Activated CD8-positive, alpha-beta T cell treated with anti-CD3 and anti-CD28 coated beads for 36 hours (primary cell): ENCODE measurements at regions of chr1 and their contacts with region 1.

Region 1: DNA sequence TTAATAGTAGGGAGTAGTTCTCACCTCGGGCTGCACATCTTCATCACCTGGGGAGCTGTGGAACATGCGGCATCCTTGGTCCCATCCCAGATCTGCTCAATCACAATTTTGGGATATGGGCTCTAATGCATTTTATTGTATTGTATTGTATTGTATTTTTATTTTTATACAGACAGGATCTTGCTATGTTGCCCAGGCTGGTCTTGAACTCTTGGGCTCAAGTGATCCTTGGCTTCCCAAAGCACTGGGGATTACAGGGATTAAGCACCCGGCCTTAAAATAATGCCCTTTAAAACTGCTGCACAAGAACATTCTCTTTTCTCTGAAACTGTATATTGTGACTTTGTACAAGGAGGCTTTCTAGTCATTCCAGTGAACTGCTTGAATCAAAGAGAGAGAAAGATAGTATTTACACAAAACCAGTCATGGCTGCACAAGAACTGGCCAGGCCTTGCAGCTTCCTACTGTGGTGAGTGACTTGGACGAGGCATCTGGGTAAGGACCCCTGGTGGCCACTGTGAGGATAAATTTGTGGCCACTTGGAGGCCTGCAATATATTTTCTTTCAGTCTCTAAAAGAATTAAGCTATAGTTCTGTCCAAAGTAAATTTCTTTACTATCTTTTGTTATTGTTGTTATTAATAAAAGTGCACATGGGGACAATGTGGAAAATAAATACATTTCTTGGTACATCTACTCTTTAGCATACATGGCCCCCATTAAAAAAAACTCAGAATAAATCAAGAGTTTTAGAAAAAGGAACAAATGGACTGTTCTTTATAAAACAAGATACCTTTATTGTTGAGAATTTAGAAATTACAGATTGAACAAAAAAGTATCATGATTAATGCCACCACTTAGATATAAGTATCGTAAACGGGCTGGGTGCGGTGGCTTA is 48.0 kb downstream of the TBCE start:
- DNase-seq: peak; percentile 74
- ATAC-seq: peak; percentile 87
- H3K4me3 Mint-ChIP-seq: no peak overlapping the region
- H3K27ac Mint-ChIP-seq: no peak overlapping the region
- H3K4me1 Mint-ChIP-seq: peaks cover 3% of the 10 kb centered on the region
- H3K27me3 Mint-ChIP-seq: no peaks in the 10 kb centered on the region
- CTCF ChIP-seq: peak; percentile 88

Region 2: GRCh38 chr1:235093696-235094592 is 321.3 kb before region 1 on chr1:
- CTCF ChIA-PET with region 1: interaction called, 28 read pairs
- POLR2A ChIA-PET with region 1: no interaction called
- intact Hi-C with region 1: loop called (anchors 2 kb)
- DNase-seq: peak; percentile 93
- ATAC-seq: peak; percentile 99
- H3K4me3 Mint-ChIP-seq: no peak overlapping the region
- H3K27ac Mint-ChIP-seq: peak overlapping the region; percentile 46
- H3K4me1 Mint-ChIP-seq: peaks cover 8% of the 10 kb centered on the region
- H3K27me3 Mint-ChIP-seq: peaks cover 6% of the 10 kb centered on the region
- CTCF ChIP-seq: peak; percentile 90

Region 3: GRCh38 chr1:235160957-235161684 is 254.1 kb before region 1 on chr1 and contains the start of gene RBM34:
- CTCF ChIA-PET with region 1: interaction called, 14 read pairs
- POLR2A ChIA-PET with region 1: no interaction called
- intact Hi-C with region 1: no loop called
- DNase-seq: peak; percentile 94
- ATAC-seq: peak; percentile 95
- H3K4me3 Mint-ChIP-seq: peak within 1 kb of the TSS; percentile 99
- H3K27ac Mint-ChIP-seq: peak within 1 kb of the TSS; percentile 100
- H3K4me1 Mint-ChIP-seq: peaks cover 16% of the 10 kb centered on the region
- H3K27me3 Mint-ChIP-seq: no peaks in the 10 kb centered on the region
- CTCF ChIP-seq: peak; percentile 10
- total RNA-seq, gene RBM34: 136 TPM

Region 4: GRCh38 chr1:235239851-235240250 is 175.4 kb before region 1 on chr1:
- CTCF ChIA-PET with region 1: interaction called, 39 read pairs
- POLR2A ChIA-PET with region 1: no interaction called
- intact Hi-C with region 1: no loop called
- DNase-seq: no peak
- ATAC-seq: no peak
- H3K4me3 Mint-ChIP-seq: no peak overlapping the region
- H3K27ac Mint-ChIP-seq: no peak overlapping the region
- H3K4me1 Mint-ChIP-seq: peaks cover 24% of the 10 kb centered on the region
- H3K27me3 Mint-ChIP-seq: no peaks in the 10 kb centered on the region
- CTCF ChIP-seq: no peak

Region 5: DNA sequence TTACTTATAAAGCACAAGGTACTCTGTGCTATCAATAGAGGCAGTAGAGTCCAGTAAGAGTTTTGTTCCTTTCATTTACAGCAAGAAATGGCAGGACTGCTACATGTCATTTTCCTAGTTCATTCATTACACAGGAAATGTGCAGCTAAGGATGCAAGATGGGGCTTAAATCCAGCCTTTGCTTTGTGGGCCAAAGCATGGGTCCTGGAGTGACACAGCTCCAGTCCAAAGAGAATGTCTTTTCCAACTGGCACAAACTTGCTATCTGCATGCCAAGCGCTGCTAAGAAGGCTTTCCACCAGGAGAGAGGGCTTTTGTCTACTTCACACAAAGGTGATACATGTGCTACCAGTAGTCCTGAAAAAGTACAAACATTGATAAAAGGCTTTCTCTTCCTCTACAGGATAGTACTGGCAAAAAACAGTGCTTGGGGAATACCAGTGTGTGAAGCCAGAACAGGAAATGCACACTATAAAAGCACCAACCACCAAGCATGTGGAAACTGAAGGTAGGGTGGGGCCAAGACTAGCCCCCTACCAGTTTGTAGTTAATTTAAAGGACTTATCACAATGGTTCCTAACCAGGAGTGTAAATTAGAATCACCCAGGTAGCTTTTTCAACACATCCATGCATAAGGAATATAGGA is 156.0 kb before region 1 on chr1:
- CTCF ChIA-PET with region 1: interaction called, 45 read pairs
- POLR2A ChIA-PET with region 1: interaction called, 3 read pairs
- intact Hi-C with region 1: no loop called
- DNase-seq: no peak
- ATAC-seq: peak; percentile 37
- H3K4me3 Mint-ChIP-seq: no peak overlapping the region
- H3K27ac Mint-ChIP-seq: peak overlapping the region; percentile 78
- H3K4me1 Mint-ChIP-seq: peaks cover 59% of the 10 kb centered on the region
- H3K27me3 Mint-ChIP-seq: no peaks in the 10 kb centered on the region
- CTCF ChIP-seq: no peak

Region 6: GRCh38 chr1:235351898-235352297 is 63.4 kb before region 1 on chr1:
- CTCF ChIA-PET with region 1: interaction called, 10 read pairs
- POLR2A ChIA-PET with region 1: no interaction called
- intact Hi-C with region 1: no loop called
- DNase-seq: no peak
- ATAC-seq: no peak
- H3K4me3 Mint-ChIP-seq: no peak overlapping the region
- H3K27ac Mint-ChIP-seq: no peak overlapping the region
- H3K4me1 Mint-ChIP-seq: no peaks in the 10 kb centered on the region
- H3K27me3 Mint-ChIP-seq: peaks cover 2% of the 10 kb centered on the region
- CTCF ChIP-seq: no peak

Region 7: GRCh38 chr1:235425357-235426025 is 10.2 kb after region 1 on chr1:
- CTCF ChIA-PET with region 1: interaction called, 24 read pairs
- POLR2A ChIA-PET with region 1: no interaction called
- intact Hi-C with region 1: no loop called
- DNase-seq: no peak
- ATAC-seq: no peak
- H3K4me3 Mint-ChIP-seq: no peak overlapping the region
- H3K27ac Mint-ChIP-seq: no peak overlapping the region
- H3K4me1 Mint-ChIP-seq: peaks cover 27% of the 10 kb centered on the region
- H3K27me3 Mint-ChIP-seq: no peaks in the 10 kb centered on the region
- CTCF ChIP-seq: no peak

Region 8: GRCh38 chr1:235461954-235462353 is 46.7 kb after region 1 on chr1:
- CTCF ChIA-PET with region 1: no interaction called
- POLR2A ChIA-PET with region 1: no interaction called
- intact Hi-C with region 1: no loop called
- DNase-seq: no peak
- ATAC-seq: no peak
- H3K4me3 Mint-ChIP-seq: no peak overlapping the region
- H3K27ac Mint-ChIP-seq: no peak overlapping the region
- H3K4me1 Mint-ChIP-seq: peaks cover 14% of the 10 kb centered on the region
- H3K27me3 Mint-ChIP-seq: no peaks in the 10 kb centered on the region
- CTCF ChIP-seq: no peak

Region 9: DNA sequence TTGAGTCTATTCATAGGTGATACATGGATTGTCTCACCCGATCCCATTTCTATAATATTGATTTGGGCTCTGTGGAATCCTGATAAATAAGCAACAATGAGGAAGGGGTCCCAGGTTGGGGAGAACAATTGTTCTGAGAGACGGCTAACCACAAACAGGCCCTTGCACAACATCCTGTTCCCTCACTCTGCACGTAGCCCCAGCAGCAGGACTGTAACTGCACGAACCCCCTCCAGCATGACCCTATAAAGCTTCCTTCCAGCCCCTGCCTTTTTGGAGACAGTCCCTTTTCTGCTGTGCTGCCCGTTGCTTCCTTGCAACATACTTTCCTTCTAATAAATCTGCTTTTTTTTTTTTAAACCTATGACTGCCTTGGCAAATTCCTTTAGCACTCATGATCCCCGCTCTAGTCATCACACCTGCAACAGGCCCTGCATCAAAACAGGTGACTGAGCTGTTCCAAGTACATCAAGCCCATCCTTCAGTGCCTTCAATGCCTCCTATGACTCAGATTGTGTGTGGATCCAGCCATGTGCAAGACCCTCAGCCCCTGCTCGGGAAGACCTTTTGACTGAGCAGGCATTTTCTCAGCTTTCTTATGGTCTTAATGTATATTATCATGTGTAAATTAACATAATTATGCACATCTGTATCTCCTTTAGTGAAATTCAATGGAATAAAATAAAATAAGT is 152.7 kb after region 1 on chr1:
- CTCF ChIA-PET with region 1: no interaction called
- POLR2A ChIA-PET with region 1: no interaction called
- intact Hi-C with region 1: no loop called
- DNase-seq: peak; percentile 57
- ATAC-seq: peak; percentile 82
- H3K4me3 Mint-ChIP-seq: no peak overlapping the region
- H3K27ac Mint-ChIP-seq: peak overlapping the region; percentile 64
- H3K4me1 Mint-ChIP-seq: peaks cover 13% of the 10 kb centered on the region
- H3K27me3 Mint-ChIP-seq: no peaks in the 10 kb centered on the region
- CTCF ChIP-seq: no peak

Region 10: DNA sequence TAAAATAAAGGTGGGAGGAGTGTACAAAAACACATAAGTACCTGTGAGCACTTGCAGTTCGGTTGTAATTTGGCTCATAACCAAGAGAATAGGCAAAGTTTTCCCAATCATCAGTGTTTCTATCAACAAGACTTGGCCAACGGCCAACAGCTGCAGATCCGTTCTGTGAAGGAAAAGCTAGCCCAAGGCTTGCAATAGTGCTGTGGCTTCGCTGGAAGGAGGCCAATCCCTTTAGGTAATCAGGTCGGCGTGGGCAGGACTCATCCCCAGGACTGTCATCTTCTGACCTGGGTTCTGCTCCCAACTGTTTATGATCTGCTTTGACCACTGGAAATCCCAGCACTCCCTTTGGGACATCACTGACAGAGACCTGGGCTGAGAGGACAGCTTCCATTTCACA is 343.7 kb after region 1 on chr1:
- CTCF ChIA-PET with region 1: no interaction called
- POLR2A ChIA-PET with region 1: no interaction called
- intact Hi-C with region 1: no loop called
- DNase-seq: no peak
- ATAC-seq: no peak
- H3K4me3 Mint-ChIP-seq: no peak overlapping the region
- H3K27ac Mint-ChIP-seq: no peak overlapping the region
- H3K4me1 Mint-ChIP-seq: no peaks in the 10 kb centered on the region
- H3K27me3 Mint-ChIP-seq: no peaks in the 10 kb centered on the region
- CTCF ChIP-seq: no peak

Region 11: GRCh38 chr1:236429715-236430274 is 1014.5 kb after region 1 on chr1:
- CTCF ChIA-PET with region 1: no interaction called
- POLR2A ChIA-PET with region 1: no interaction called
- intact Hi-C with region 1: no loop called
- DNase-seq: no peak
- ATAC-seq: no peak
- H3K4me3 Mint-ChIP-seq: no peak overlapping the region
- H3K27ac Mint-ChIP-seq: no peak overlapping the region
- H3K4me1 Mint-ChIP-seq: peaks cover 6% of the 10 kb centered on the region
- H3K27me3 Mint-ChIP-seq: no peaks in the 10 kb centered on the region
- CTCF ChIP-seq: no peak